Natural killer cell (primary cell): ENCODE measurements at regions of chr20 and their contacts with region 1.

Region 1: DNA sequence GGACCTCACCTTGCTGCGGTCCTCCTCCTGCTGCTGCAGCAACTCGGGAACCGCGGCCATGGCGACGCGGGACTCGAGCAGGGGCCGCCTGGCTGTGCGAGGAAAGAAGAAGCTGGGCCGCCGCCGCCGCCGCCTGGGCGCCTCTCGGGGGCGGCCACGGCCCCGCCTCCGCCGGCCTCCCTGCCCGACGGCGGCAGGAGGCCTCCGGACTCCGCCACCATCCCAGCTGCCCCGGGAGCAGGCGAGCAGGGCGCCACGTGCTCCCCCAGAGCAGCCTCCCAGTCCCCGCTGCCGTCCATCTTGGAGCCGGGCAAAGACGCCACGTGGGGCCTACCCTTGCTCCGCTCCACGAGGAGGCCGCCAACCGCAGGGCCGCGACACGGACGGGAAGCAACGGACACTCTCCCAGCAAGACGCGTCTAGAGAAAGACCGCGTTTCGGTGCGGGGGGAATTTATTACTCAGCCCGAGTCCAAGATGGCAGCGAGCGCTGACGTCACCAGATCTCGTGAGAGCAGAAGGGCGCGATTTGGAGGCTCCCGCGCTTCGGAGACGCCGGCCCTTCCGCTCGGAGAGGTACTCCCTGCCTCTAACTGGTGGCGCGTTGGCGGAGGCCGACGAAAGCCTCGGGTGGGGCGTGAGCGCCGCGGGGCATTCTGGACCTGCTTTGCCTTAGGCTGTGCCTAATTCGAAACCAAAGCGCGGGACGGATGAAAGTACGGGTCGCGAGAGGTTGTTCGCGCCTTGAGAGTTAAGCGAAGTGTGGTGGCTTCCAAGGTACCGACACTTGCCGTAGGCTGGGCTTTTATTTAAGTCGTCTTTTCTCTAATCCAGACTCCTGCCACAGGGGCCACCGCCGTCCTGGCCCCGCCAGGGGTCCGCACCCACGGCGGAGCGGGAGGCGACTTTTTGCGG is at the starts of genes MGME1 and SNX5:
- DNase-seq: peak; percentile 99
- ATAC-seq: peak; percentile 87 to 97 (median 91)
- H3K4me3 ChIP-seq: peak within 1 kb of the TSS; percentile 88
- H3K4me3 Mint-ChIP-seq: peak within 1 kb of the TSS; percentile 98
- H3K27ac ChIP-seq: peak within 1 kb of the TSS; percentile 99
- H3K27ac Mint-ChIP-seq: peak within 1 kb of the TSS; percentile 95 to 98
- H3K4me1 ChIP-seq: peaks cover 40% of the 10 kb centered on the region
- H3K4me1 Mint-ChIP-seq: peaks cover 80 to 83% of the 10 kb centered on the region in 2 donors
- H3K27me3 ChIP-seq: no peaks in the 10 kb centered on the region
- H3K27me3 Mint-ChIP-seq: no peaks in the 10 kb centered on the region
- CTCF ChIP-seq: no peak
- total RNA-seq, gene MGME1: 10.3 to 25.1 (median 13.0) TPM
- total RNA-seq, gene SNX5: 62.3 to 85.4 (median 72.1) TPM

Region 2: GRCh38 chr20:16729565-16730456 is 1238.8 kb before region 1 on chr20 and contains the start of gene SNRPB2:
- intact Hi-C with region 1: loop called (anchors 10 kb)
- DNase-seq: peak; percentile 86 to 96
- ATAC-seq: peak; percentile 97 to 99 (median 97)
- H3K4me3 ChIP-seq: peak within 1 kb of the TSS; percentile 89
- H3K4me3 Mint-ChIP-seq: peak within 1 kb of the TSS; percentile 99
- H3K27ac ChIP-seq: peak within 1 kb of the TSS; percentile 85
- H3K27ac Mint-ChIP-seq: peak within 1 kb of the TSS; percentile 96 to 98
- H3K4me1 ChIP-seq: peaks cover 14% of the 10 kb centered on the region
- H3K4me1 Mint-ChIP-seq: peaks cover 54 to 55% of the 10 kb centered on the region in 2 donors
- H3K27me3 ChIP-seq: peaks cover 7% of the 10 kb centered on the region
- H3K27me3 Mint-ChIP-seq: peaks cover 20 to 31% of the 10 kb centered on the region in 2 donors
- CTCF ChIP-seq: no peak
- total RNA-seq, gene SNRPB2: 39.4 to 43.0 (median 40.5) TPM

Region 3: DNA sequence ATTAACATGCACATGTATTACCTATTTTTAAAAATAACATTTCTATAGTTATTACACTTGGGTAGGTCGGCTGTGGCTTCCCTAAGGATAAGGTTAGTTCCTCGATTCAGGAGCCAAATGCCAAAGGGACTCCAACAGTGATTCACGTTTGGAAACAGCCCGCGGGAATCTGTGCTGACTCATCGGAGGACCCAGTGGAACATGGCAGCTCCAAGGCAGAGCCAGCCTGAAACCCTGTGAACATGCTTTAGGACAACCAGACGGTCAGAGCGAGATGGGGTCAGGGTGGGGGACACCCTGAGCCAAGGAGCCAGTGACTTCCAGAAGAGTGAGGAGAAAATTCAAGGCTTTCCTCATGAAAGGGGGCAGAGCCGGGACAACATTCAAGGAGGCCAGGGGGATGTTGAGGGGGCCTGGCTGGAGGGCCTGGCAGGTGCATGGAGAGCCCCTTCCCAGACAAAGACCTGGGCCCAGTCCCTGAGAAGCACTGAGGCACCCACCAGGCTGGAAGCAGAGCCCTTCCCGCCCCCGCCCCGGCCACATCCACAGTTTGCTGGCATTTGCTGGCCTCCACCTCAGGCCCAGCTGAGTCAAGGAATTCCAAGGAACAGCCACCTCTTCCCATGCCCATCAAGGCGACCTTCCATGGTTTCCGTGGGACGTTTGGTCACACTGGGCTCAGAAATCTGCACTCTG is 133.2 kb before region 1 on chr20:
- intact Hi-C with region 1: no loop called
- DNase-seq: no peak
- ATAC-seq: no peak
- H3K4me3 ChIP-seq: no peak overlapping the region
- H3K4me3 Mint-ChIP-seq: no peak overlapping the region
- H3K27ac ChIP-seq: no peak overlapping the region
- H3K27ac Mint-ChIP-seq: no peak overlapping the region
- H3K4me1 ChIP-seq: no peaks in the 10 kb centered on the region
- H3K4me1 Mint-ChIP-seq: no peaks in the 10 kb centered on the region
- H3K27me3 ChIP-seq: no peaks in the 10 kb centered on the region
- H3K27me3 Mint-ChIP-seq: no peaks in the 10 kb centered on the region
- CTCF ChIP-seq: no peak

Region 4: GRCh38 chr20:17958373-17959256 is 10.0 kb before region 1 on chr20:
- intact Hi-C with region 1: loop called (anchors 1 kb)
- DNase-seq: peak in 1 of 2 donors; percentile 8
- ATAC-seq: peak in 1 of 3 donors; percentile 29
- H3K4me3 ChIP-seq: no peak overlapping the region
- H3K4me3 Mint-ChIP-seq: peak overlapping the region; percentile 51
- H3K27ac ChIP-seq: peak overlapping the region; percentile 24
- H3K27ac Mint-ChIP-seq: peak overlapping the region; percentile 76 to 98
- H3K4me1 ChIP-seq: peaks cover 36% of the 10 kb centered on the region
- H3K4me1 Mint-ChIP-seq: peaks cover 64 to 71% of the 10 kb centered on the region in 2 donors
- H3K27me3 ChIP-seq: no peaks in the 10 kb centered on the region
- H3K27me3 Mint-ChIP-seq: no peaks in the 10 kb centered on the region
- CTCF ChIP-seq: no peak

Region 5: GRCh38 chr20:18137412-18138265 is 169.0 kb after region 1 on chr20 and contains the starts of genes KAT14 and PET117:
- intact Hi-C with region 1: loop called (anchors 2 kb)
- DNase-seq: peak; percentile 94 to 96
- ATAC-seq: peak; percentile 91 to 98 (median 93)
- H3K4me3 ChIP-seq: peak within 1 kb of the TSS; percentile 98
- H3K4me3 Mint-ChIP-seq: peak within 1 kb of the TSS; percentile 88
- H3K27ac ChIP-seq: peak within 1 kb of the TSS; percentile 89
- H3K27ac Mint-ChIP-seq: peak within 1 kb of the TSS; percentile 67 to 91
- H3K4me1 ChIP-seq: peaks cover 15% of the 10 kb centered on the region
- H3K4me1 Mint-ChIP-seq: peaks cover 27 to 37% of the 10 kb centered on the region in 2 donors
- H3K27me3 ChIP-seq: no peaks in the 10 kb centered on the region
- H3K27me3 Mint-ChIP-seq: no peaks in the 10 kb centered on the region
- CTCF ChIP-seq: no peak
- total RNA-seq, gene KAT14: 9.7 to 13.0 (median 10.9) TPM
- total RNA-seq, gene PET117: 7.0 to 11.7 (median 10.4) TPM

Region 6: GRCh38 chr20:18466894-18467730 is 498.5 kb after region 1 on chr20 and contains the starts of genes DZANK1 and POLR3F:
- intact Hi-C with region 1: loop called (anchors 2 kb)
- DNase-seq: peak; percentile 87 to 94
- ATAC-seq: peak; percentile 92 to 95 (median 94)
- H3K4me3 ChIP-seq: peak within 1 kb of the TSS; percentile 70
- H3K4me3 Mint-ChIP-seq: peak within 1 kb of the TSS; percentile 97
- H3K27ac ChIP-seq: peak within 1 kb of the TSS; percentile 84
- H3K27ac Mint-ChIP-seq: peak within 1 kb of the TSS; percentile 95 to 97
- H3K4me1 ChIP-seq: peaks cover 16% of the 10 kb centered on the region
- H3K4me1 Mint-ChIP-seq: peaks cover 21 to 28% of the 10 kb centered on the region in 2 donors
- H3K27me3 ChIP-seq: no peaks in the 10 kb centered on the region
- H3K27me3 Mint-ChIP-seq: no peaks in the 10 kb centered on the region
- CTCF ChIP-seq: no peak
- total RNA-seq, gene DZANK1: 2.7 to 5.7 (median 3.7) TPM
- total RNA-seq, gene POLR3F: 8.5 to 10.6 (median 8.8) TPM